ENCODE measurements at regions of chr7 and their contacts with region 1.

Region 1: DNA sequence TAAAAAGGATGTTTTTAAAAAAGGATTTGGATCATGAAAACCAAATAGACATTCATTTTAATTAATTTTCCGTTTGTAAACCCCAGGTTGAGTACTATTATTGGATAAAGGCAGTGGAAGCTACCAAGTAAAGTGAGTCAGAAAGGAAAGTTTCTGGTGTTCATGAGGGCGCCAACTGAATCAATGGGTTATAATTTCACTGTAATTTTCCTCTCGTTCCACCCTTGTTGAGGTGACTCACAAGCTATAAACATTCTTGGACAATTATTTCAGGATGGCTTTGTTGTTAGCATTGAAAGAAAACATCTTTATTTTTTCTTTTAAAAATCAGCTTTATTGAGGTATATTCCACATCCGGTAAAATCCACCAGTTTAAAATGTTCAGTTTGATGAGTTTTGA is 5.1 kb upstream of the FAM133B start:
- DNase-seq: no peak
- H3K4me3 Mint-ChIP-seq: no peak overlapping the region
- H3K27ac Mint-ChIP-seq: no peak overlapping the region
- H3K4me1 Mint-ChIP-seq: no peaks in the 10 kb centered on the region
- H3K27me3 Mint-ChIP-seq: no peaks in the 10 kb centered on the region
- CTCF ChIP-seq: no peak

Region 2: DNA sequence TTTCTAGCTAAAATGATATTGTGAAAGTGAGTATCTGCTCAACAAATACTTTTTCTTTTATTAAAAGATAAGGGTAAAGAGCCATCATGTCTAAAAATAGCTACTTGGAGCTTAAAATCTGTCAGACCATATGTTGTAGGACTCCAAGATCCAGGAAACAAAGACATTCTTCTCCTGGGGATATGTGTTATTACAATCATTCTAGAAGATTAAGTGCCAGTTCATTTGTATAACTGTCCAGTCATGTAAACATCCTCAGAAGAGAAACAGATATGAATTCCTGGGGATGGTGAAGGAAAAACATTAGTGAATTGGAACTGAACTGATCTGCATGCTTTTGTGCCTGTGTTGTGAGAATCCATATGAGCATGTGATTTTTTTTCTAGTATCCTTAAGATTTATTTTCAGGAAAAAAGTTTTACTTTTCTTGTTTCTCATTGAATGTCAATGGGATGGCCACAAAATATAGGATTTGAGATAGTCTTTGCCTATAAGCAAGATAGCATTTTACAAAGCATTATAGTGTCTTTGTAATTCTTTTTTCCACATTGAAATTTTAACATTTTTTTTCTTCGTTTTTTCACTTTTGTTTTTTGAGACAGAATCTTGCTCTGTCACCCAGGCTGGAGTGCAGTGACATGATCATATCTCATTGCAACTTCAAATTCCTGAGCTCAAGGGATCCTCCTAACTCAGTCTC is 700.4 kb before region 1 on chr7:
- CTCF ChIA-PET with region 1: interaction called, 10 read pairs
- intact Hi-C with region 1: no loop called
- DNase-seq: no peak
- H3K4me3 Mint-ChIP-seq: no peak overlapping the region
- H3K27ac Mint-ChIP-seq: no peak overlapping the region
- H3K4me1 Mint-ChIP-seq: no peaks in the 10 kb centered on the region
- H3K27me3 Mint-ChIP-seq: no peaks in the 10 kb centered on the region
- CTCF ChIP-seq: no peak

Region 3: GRCh38 chr7:92436612-92437445 is 158.5 kb before region 1 on chr7:
- CTCF ChIA-PET with region 1: no interaction called
- intact Hi-C with region 1: no loop called
- DNase-seq: no peak
- H3K4me3 Mint-ChIP-seq: no peak overlapping the region
- H3K27ac Mint-ChIP-seq: no peak overlapping the region
- H3K4me1 Mint-ChIP-seq: no peaks in the 10 kb centered on the region
- H3K27me3 Mint-ChIP-seq: peaks cover 16% of the 10 kb centered on the region
- CTCF ChIP-seq: no peak